Activated CD4-positive, alpha-beta T cell treated with anti-CD3 and anti-CD28 coated beads, Interleukin-2, amount 10 ng/mL, durations not matched to agents 24 days and 14 days (primary cell): ENCODE measurements at regions of chr7 and their contacts with region 1.

Region 1: GRCh38 chr7:37448636-37449361 is at the start of gene ELMO1:
- DNase-seq: peak; percentile 94
- H3K4me3 Mint-ChIP-seq: peak within 1 kb of the TSS; percentile 98
- H3K27ac Mint-ChIP-seq: peak within 1 kb of the TSS; percentile 99
- H3K4me1 Mint-ChIP-seq: peaks cover 39% of the 10 kb centered on the region
- H3K27me3 Mint-ChIP-seq: peaks cover 6% of the 10 kb centered on the region
- total RNA-seq, gene ELMO1: 110 and 121 TPM in 2 replicates

Region 2: GRCh38 chr7:37208528-37208927 is 240.3 kb before region 1 on chr7:
- intact Hi-C with region 1: loop called (anchors 5 kb)
- DNase-seq: peak; percentile 83
- H3K4me3 Mint-ChIP-seq: no peak overlapping the region
- H3K27ac Mint-ChIP-seq: no peak overlapping the region
- H3K4me1 Mint-ChIP-seq: peaks cover 15% of the 10 kb centered on the region
- H3K27me3 Mint-ChIP-seq: no peaks in the 10 kb centered on the region

Region 3: GRCh38 chr7:37234928-37235327 is 213.9 kb before region 1 on chr7:
- intact Hi-C with region 1: loop called (anchors 5 kb)
- DNase-seq: no peak
- H3K4me3 Mint-ChIP-seq: no peak overlapping the region
- H3K27ac Mint-ChIP-seq: no peak overlapping the region
- H3K4me1 Mint-ChIP-seq: peaks cover 10% of the 10 kb centered on the region
- H3K27me3 Mint-ChIP-seq: no peaks in the 10 kb centered on the region

Region 4: DNA sequence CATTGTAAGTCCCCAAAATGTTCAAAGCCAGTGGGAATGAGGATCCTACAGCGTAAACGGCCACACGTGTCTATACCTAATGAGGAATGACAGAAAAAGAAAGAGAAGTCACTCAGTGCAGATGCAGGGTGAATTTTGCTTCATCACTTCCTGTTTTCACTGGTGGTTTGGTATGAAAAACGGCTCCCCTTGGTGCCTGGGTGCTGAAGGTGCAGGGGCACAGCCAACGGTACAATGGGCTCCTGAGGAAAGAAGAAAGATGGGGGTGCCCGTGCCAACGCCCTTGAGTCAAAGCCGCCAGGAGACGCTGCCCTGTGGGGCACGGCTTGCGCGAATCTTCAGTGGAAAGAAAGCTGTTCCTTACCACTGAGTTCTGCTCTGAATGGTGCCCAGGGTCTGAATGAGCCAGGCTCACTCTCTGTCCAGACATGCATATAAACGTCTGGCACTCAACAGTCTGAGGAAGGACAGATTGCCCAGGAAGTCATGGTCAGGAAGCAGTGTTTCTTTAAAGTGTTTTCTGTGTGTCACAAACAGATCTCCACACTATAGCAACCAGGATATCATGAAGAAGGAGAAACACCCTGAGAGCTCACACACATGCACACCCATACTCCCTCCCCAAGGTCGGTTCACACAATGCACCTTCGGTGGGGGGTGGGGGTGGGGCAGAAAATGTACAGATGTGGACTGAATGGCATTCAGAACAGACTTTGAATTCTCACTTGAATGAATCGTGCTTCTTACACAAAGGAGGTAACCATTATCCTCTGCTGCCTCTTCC is 105.9 kb before region 1 on chr7:
- intact Hi-C with region 1: loop called (anchors 2 kb)
- DNase-seq: peak; percentile 89
- H3K4me3 Mint-ChIP-seq: peak overlapping the region; percentile 92
- H3K27ac Mint-ChIP-seq: peak overlapping the region; percentile 99
- H3K4me1 Mint-ChIP-seq: peaks cover 61% of the 10 kb centered on the region
- H3K27me3 Mint-ChIP-seq: no peaks in the 10 kb centered on the region

Region 5: DNA sequence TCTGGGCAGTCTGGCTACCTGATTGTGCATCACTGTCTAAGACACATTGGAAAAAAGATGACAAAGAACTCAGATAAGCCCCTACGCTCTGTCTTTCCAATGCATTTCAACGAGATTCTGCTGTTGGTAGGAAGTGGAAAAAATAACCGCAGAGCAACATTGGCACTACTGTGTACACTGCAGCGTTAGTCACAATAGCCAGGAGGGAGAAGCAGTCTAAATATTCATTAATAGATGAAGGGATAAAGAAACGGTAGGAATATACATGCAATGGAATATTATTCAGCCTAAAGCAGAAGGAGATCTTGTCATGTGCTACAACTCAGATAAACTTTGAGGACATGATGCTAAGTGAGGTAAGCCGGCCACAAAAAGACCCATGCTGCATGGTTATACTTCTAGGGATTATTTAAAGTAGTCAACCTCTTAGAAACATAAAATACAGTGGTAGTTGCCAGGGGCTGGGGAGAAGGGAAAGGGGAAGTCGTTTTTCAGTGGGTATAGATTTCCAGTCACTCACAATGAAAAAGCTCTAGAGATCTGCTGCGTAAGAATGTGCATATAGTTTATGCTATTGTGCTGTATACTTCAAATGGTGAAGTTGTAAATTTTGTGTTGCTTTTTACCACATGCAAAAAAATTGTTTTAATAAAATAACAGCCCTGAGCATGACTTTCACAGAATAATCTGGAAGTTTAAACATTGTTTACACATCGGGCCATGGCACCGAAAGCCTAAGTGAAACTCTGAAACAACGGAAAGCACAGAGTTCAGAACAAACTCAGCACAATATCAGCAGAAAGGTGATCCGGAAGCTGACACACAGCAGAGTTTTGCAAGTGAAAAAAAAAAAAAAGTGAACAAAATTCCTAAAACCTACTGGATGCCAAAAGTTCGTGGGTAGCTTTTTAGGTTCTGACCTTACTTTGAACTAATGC is 40.2 kb before region 1 on chr7:
- intact Hi-C with region 1: loop called (anchors 1 kb)
- DNase-seq: peak; percentile 77
- H3K4me3 Mint-ChIP-seq: peak overlapping the region; percentile 81
- H3K27ac Mint-ChIP-seq: peak overlapping the region; percentile 91
- H3K4me1 Mint-ChIP-seq: peaks cover 56% of the 10 kb centered on the region
- H3K27me3 Mint-ChIP-seq: no peaks in the 10 kb centered on the region

Region 6: DNA sequence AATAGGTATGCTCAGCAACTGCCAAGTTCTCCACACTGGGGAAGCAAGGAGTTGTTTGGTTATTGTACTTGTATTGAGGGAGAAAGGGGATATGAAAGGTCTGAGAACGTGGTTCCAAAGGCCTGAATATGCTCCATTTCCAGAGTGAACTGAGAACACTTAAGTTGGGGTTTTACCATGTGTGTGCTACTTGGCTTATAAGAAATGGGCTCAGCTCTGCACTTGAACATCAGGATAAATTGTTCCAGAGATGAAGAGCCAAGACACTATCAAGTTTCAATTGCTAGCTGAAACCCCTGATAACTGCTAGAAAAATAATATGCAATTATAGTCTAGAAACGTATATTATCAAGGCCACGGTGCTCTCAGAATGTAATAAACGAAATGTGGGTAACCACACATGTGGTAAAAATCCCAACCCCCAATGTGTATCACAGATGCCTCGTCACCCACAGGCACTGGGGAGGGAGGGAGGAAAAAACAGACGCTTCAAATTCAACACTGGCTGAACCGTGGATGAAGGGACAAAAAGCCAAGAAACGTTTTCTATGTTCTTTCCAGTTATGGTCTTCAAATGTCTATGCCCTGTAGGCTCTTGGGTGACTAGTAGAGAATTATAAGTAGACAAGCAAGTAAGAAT is 16.4 kb before region 1 on chr7:
- intact Hi-C with region 1: loop called (anchors 1 kb)
- DNase-seq: peak; percentile 72
- H3K4me3 Mint-ChIP-seq: peak overlapping the region; percentile 31
- H3K27ac Mint-ChIP-seq: peak overlapping the region; percentile 72
- H3K4me1 Mint-ChIP-seq: peaks cover 40% of the 10 kb centered on the region
- H3K27me3 Mint-ChIP-seq: no peaks in the 10 kb centered on the region

Region 7: GRCh38 chr7:37495574-37496184 is 46.9 kb after region 1 on chr7:
- intact Hi-C with region 1: loop called (anchors 2 kb)
- DNase-seq: peak; percentile 62
- H3K4me3 Mint-ChIP-seq: no peak overlapping the region
- H3K27ac Mint-ChIP-seq: no peak overlapping the region
- H3K4me1 Mint-ChIP-seq: peaks cover 5% of the 10 kb centered on the region
- H3K27me3 Mint-ChIP-seq: peaks cover 1% of the 10 kb centered on the region

Region 8: GRCh38 chr7:37531225-37531624 is 82.4 kb after region 1 on chr7:
- intact Hi-C with region 1: no loop called
- DNase-seq: no peak
- H3K4me3 Mint-ChIP-seq: no peak overlapping the region
- H3K27ac Mint-ChIP-seq: no peak overlapping the region
- H3K4me1 Mint-ChIP-seq: no peaks in the 10 kb centered on the region
- H3K27me3 Mint-ChIP-seq: peaks cover 25% of the 10 kb centered on the region

Region 9: GRCh38 chr7:37853474-37853873 is 404.7 kb after region 1 on chr7:
- intact Hi-C with region 1: no loop called
- DNase-seq: no peak
- H3K4me3 Mint-ChIP-seq: no peak overlapping the region
- H3K27ac Mint-ChIP-seq: no peak overlapping the region
- H3K4me1 Mint-ChIP-seq: no peaks in the 10 kb centered on the region
- H3K27me3 Mint-ChIP-seq: peaks cover 2% of the 10 kb centered on the region